ENCODE measurements at regions of chr7 and their contacts with region 1.

Region 1: DNA sequence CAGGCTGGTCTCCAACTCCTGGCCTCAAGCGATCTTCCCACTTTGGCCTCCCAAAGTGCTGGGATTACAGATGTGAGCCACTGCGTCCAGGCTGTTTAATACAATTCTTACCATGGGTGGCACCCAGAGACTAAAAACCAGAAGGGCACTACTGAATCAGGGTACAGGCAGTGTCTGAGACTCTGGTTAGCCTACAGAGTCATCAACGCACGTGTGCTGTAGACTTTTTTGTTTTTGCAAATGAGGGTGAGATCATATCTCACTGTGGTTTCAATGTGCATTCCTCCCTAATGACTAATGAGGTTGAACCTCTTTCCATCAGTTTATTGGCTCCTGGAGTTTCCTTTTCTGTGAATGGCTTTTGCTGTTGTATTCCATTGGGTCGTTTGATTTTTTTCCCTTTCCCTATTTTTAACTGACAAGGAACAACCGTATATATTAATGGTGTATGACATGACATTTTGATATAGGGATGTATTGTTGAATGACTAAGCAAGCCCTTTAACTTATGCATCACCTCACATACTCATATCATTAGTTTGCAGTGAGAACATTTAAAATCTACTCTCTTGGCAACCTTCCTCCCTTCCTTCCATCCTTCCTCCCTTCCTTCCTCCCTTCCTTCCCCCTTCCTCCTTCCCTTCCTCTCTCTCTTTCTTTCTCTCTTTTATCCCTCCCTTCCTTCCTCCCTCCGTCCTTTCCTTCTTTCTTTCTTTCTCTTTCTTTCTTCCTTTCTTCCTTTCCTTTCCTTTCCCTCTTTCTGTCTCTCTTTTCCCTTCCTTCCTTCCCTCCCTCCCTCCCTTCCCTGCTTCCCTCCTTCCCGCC is 9.3 kb upstream of the METTL27 start:
- DNase-seq: peak; percentile 98
- ATAC-seq: peak; percentile 72
- H3K4me3 ChIP-seq: peak overlapping the region; percentile 27; the same call in 1 of the 2 replicates
- H3K27ac ChIP-seq: peak overlapping the region; percentile 97
- H3K4me1 ChIP-seq: peaks cover 51% of the 10 kb centered on the region
- H3K27me3 ChIP-seq: no peaks in the 10 kb centered on the region
- CTCF ChIP-seq: no peak

Region 2: DNA sequence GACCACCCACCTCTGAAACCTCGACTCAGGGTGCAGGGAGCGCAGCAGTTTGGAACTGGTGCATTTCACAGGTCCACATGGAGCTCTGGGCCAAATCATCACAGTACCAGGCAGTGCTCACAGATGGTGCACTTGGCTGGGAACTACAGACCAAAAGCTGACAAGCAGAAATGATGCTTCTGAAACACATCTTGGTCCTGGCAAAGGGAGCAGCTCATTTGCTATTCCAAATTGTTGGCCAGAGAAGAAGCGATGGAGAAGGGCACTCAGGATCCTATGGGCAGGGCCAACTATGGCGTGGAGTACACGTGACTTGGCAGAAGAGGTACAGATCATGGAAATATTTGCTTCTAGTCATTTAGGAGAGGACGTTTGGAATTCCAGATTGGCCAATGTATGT is 1823.4 kb before region 1 on chr7:
- CTCF ChIA-PET with region 1: no interaction called
- POLR2A ChIA-PET with region 1: no interaction called
- intact Hi-C with region 1: no loop called
- DNase-seq: no peak
- ATAC-seq: no peak
- H3K4me3 ChIP-seq: no peak overlapping the region
- H3K27ac ChIP-seq: no peak overlapping the region
- H3K4me1 ChIP-seq: no peaks in the 10 kb centered on the region
- H3K27me3 ChIP-seq: no peaks in the 10 kb centered on the region
- CTCF ChIP-seq: no peak

Region 3: DNA sequence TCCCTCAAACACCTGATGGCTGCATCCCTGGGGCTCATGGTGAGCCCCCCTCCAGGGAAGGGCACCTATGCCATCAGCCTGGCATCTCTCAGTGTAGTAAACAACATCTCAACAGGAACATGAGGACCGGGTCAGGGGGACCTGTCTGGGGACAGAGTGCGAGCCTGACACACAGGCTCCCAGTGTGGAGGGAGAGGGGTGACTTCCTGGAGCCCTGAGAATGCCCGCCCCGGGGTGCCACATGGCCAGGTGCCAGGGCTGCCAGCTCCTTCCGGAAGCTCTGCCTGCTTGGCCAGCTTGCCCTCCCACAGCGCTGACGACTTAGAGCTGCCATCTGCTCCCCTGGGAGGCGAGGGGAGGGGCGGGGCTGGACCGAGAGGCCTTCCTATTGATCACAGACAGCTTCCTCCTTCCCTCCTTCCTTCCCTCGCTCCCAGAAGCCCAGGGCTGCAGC is 144.5 kb before region 1 on chr7:
- CTCF ChIA-PET with region 1: no interaction called
- POLR2A ChIA-PET with region 1: interaction called, 13 read pairs
- intact Hi-C with region 1: no loop called
- DNase-seq: peak; percentile 89
- ATAC-seq: peak; percentile 36
- H3K4me3 ChIP-seq: peak overlapping the region; percentile 30; the same call in 1 of the 2 replicates
- H3K27ac ChIP-seq: peak overlapping the region; percentile 100
- H3K4me1 ChIP-seq: peaks cover 47% of the 10 kb centered on the region
- H3K27me3 ChIP-seq: no peaks in the 10 kb centered on the region
- CTCF ChIP-seq: no peak

Region 4: DNA sequence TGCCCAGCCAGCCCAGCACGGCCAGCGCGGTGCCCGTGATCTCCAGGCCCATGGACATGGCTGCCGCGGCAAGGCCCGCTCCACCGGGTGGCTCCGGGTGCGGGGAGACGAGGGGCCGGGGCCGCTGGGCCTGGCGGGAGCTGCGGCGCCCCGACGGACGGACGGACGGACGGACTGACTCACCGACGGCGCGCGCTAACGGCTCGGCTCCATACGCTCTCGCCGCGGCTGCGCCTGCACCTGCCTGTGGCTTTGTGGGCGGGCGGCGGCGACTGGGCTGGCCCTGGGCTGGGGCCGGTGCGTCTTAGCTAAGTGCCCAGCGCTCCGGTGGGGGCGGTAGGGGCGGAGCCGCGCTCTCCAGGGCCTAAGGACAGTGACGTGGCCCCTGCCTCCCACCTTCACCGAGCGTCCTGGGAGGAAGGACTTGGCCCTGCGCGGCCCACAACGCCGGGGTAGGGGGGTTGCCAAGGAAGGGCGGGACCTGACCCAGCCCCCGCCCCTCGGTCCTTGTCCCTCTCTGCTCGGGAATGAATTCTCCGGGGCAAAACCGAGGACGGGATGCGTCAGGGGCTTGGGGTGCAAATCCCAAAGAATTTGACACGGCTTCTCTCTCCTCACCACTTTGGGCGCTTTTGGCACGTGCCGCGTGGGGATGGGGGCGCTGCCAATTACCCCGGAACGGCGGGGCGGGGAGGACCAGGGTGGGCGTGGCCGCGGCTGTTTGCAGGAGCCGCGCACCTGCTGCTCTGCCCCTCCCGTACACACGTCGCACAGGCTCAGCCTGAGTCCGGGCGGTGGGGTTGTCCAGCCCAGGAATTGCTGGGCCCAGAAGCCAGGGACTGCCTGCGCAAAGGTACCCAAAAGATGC is 81.4 kb before region 1 on chr7 and contains the start of gene CLDN3:
- CTCF ChIA-PET with region 1: interaction called, 5 read pairs
- POLR2A ChIA-PET with region 1: interaction called, 3 read pairs
- intact Hi-C with region 1: loop called (anchors 10 kb)
- DNase-seq: peak; percentile 92
- ATAC-seq: peak; percentile 93
- H3K4me3 ChIP-seq: peak within 1 kb of the TSS; percentile 69
- H3K27ac ChIP-seq: peak within 1 kb of the TSS; percentile 39
- H3K4me1 ChIP-seq: peaks cover 23% of the 10 kb centered on the region; the same call in 1 of the 2 replicates
- H3K27me3 ChIP-seq: no peaks in the 10 kb centered on the region
- CTCF ChIP-seq: no peak
- total RNA-seq, gene CLDN3: 51.6 and 70.7 TPM in 2 replicates

Region 5: DNA sequence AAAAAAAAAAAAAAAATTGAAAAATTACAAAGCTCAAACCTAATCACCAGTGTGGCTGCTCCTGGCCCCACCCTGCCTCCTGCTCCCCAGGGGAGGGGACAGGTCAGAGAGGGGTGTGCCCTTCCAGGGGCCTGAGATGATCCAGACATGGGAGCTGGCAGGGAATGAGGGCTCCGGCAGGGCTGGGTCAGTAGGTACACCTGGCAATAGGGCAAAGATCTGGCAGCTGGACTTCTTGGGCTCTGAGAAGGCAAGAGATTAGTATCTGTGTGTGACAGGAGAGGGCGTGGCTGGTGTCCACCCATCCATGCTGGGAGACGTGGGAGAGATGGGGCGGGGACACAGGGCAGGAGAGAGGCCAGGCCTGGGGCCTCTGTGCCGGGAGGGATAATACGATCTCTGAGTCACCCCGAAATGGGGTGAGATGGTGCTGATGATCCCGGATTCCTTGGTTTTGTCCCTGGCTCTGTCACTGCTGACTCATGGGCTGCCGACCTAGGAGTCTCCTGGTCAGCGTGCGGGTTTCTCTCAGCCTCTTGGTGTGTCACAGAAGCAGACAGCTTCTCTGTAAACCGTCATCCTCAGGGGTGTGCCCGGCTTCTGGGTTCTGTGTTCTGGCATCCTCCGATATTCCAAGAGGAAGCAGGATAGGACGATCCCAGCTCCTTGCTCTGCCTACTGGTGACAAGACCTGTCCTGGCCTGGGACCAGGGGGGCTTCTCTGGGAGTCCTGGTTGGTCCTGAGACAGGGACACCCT is 29.1 kb before region 1 on chr7:
- CTCF ChIA-PET with region 1: interaction called, 18 read pairs
- POLR2A ChIA-PET with region 1: interaction called, 18 read pairs
- intact Hi-C with region 1: loop called (anchors 1 kb)
- DNase-seq: peak; percentile 99
- ATAC-seq: peak; percentile 92
- H3K4me3 ChIP-seq: peak overlapping the region; percentile 28; the same call in 1 of the 2 replicates
- H3K27ac ChIP-seq: peak overlapping the region; percentile 99
- H3K4me1 ChIP-seq: peaks cover 47% of the 10 kb centered on the region
- H3K27me3 ChIP-seq: no peaks in the 10 kb centered on the region
- CTCF ChIP-seq: no peak